Common myeloid progenitor, CD34-positive (primary cell): ENCODE measurements at regions of chr6 and their contacts with region 1.

Region 1: GRCh38 chr6:41039060-41039998 is at the start of gene UNC5CL:
- DNase-seq: peak; percentile 37 to 66 (median 59)
- H3K4me3 ChIP-seq: no peak within 1 kb of the TSS
- H3K27ac ChIP-seq: no peak within 1 kb of the TSS
- H3K4me1 ChIP-seq: peaks cover 0 to 8% (median 7%) of the 10 kb centered on the region in 4 experiments
- H3K27me3 ChIP-seq: no peaks in the 10 kb centered on the region

Region 2: GRCh38 chr6:40999569-40999968 is 39.8 kb before region 1 on chr6:
- CTCF ChIA-PET with region 1: interaction called, 10 read pairs
- POLR2A ChIA-PET with region 1: no interaction called
- DNase-seq: peak; percentile 75 to 87 (median 86)
- H3K4me3 ChIP-seq: no peak overlapping the region
- H3K27ac ChIP-seq: no peak overlapping the region
- H3K4me1 ChIP-seq: no peaks in the 10 kb centered on the region
- H3K27me3 ChIP-seq: peaks cover 0 to 10% (median 0%) of the 10 kb centered on the region in 5 experiments

Region 3: DNA sequence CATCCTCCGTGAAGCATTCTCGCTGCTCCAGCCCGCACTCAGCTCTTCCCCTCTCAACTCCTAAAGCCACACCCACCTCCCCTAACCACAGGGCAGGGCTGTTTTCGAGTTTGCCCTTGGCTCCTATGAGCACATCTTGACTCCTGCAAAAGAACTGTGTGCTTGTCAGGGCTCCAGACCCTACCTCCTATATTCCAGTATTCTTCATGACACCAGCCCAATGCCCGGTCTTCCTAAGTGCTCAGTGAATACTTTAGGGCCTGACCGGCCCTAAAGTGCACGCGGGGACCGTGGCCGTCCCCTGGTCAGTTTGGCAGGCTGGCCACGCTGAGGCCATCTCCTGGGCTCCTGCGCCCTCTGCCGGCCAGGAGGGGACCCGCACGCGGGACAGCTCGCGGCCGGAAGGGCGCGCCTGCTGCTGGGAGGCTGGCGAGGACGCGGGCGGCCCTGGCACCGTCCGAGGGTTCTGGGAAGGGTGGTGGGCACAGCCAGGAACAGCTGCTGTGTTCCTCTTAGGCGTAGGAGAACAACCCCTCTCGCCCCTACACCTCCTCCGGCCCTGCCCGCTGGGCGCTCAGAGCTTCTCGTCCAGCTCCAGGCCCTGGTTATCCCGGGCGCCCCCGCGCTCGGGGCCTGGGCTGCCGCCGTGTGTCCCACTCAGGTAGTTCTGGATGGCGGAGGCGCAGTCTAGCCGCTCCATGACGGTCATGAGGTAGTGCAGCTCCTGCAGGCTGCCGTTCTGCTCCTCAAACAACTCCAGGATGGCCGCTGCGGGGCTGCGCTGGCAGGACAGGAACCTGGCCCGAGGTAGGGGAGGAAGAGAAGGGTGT is 11.3 kb before region 1 on chr6:
- CTCF ChIA-PET with region 1: interaction called, 38 read pairs
- POLR2A ChIA-PET with region 1: no interaction called
- DNase-seq: peak; percentile 86 to 93 (median 93)
- H3K4me3 ChIP-seq: peak overlapping the region; percentile 63 to 88 (median 76)
- H3K27ac ChIP-seq: peak overlapping the region; percentile 51 to 79
- H3K4me1 ChIP-seq: peaks cover 0 to 37% (median 27%) of the 10 kb centered on the region in 4 experiments
- H3K27me3 ChIP-seq: no peaks in the 10 kb centered on the region

Region 4: GRCh38 chr6:41053041-41053440 is 13.7 kb after region 1 on chr6 and contains the start of gene APOBEC2:
- CTCF ChIA-PET with region 1: interaction called, 82 read pairs
- POLR2A ChIA-PET with region 1: no interaction called
- DNase-seq: no peak
- H3K4me3 ChIP-seq: no peak within 1 kb of the TSS
- H3K27ac ChIP-seq: no peak within 1 kb of the TSS
- H3K4me1 ChIP-seq: peaks cover 2 to 29% (median 8%) of the 10 kb centered on the region in 4 experiments
- H3K27me3 ChIP-seq: no peaks in the 10 kb centered on the region

Region 5: GRCh38 chr6:41066867-41067304 is 27.6 kb after region 1 on chr6:
- CTCF ChIA-PET with region 1: interaction called, 17 read pairs
- POLR2A ChIA-PET with region 1: no interaction called
- DNase-seq: peak; percentile 77 to 85 (median 79)
- H3K4me3 ChIP-seq: no peak overlapping the region
- H3K27ac ChIP-seq: no peak overlapping the region
- H3K4me1 ChIP-seq: peaks cover 6 to 19% (median 10%) of the 10 kb centered on the region in 4 experiments
- H3K27me3 ChIP-seq: no peaks in the 10 kb centered on the region